ENCODE measurements at regions of chr13 and their contacts with region 1.

Region 1: DNA sequence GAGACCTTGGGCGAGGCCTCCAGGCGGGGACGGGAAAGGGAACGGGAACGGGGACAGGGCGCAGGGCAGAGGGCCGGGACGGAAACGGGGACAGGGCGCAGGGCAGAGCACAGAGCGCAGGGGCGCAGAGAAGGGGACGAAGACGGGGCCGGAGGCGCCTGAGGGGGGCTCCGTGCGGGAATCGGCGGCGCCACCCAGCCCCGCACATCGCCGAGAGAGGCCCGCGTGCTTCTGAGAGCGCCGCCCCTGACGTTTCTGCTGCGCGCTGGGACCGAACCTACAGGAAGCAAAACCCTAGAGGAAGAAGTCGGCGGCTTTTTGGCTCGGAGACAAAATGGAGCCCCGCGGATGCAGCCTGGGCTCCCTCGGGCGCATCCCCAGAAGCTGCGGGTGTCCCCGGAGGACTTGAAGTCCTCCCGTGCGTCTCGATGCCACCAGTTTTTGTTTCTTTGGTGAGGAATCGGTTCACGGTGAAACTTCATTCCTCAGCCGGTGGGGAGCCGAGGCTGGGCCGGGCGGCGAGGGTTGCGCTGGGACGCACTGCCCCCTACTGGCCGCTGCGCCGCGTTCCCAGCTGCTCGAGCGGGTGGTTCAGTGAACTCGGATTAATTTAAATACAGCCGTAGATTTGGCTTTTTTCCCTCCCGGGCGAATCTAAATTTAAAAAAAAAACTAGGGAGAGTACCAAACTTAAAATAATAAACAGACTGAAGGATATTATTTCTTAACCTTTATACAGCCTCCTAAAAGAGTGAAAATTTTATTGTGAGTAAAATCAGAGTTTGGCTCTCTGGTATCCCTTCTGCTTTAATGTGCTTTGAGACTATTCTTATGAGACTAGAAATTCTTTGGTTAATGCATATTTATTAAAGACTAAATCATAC is 350.0 kb upstream of the ARGLU1 start:
- DNase-seq: peak in 1 of 2 donors; percentile 88
- H3K4me3 ChIP-seq: peak overlapping the region; percentile 69 to 82
- H3K27ac ChIP-seq: peak overlapping the region; percentile 87 to 98
- H3K4me1 ChIP-seq: peaks cover 5 to 18% of the 10 kb centered on the region in 2 donors
- H3K27me3 ChIP-seq: no peaks in the 10 kb centered on the region
- CTCF ChIP-seq: peak; percentile 81 to 97 (median 94)

Region 2: GRCh38 chr13:106619688-106620555 is 298.0 kb before region 1 on chr13:
- intact Hi-C with region 1: loop called (anchors 5 kb)
- DNase-seq: no peak
- H3K4me3 ChIP-seq: no peak overlapping the region
- H3K27ac ChIP-seq: no peak overlapping the region
- H3K4me1 ChIP-seq: no peaks in the 10 kb centered on the region
- H3K27me3 ChIP-seq: no peaks in the 10 kb centered on the region
- CTCF ChIP-seq: peak; percentile 47 to 76 (median 69)

Region 3: DNA sequence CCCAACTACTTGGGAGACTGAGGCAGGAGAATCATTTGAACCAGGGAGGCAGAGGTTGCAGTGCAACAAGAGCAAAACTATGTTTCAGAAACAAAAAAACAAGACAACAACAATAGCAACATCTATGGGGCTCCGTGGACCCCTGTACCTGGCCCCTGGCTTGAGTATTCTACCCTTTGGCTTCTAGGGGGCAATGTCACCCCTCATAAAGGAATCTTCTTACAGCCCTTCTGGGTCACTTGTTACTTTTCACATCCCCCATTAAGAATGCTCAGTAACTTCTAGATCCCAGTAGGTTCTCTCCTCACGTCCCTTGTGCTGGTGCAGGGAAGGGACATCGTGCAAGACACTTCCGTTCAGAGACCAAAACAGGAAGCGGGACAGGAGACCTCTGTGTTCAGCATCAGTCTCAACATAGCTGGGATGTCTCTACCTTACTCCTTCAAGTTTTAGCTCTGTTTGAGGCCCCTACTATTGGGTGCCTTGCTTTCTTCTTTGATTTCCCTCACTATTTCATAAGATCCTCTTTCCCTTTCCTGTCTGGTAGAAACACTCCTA is 131.8 kb before region 1 on chr13:
- intact Hi-C with region 1: no loop called
- DNase-seq: no peak
- H3K4me3 ChIP-seq: no peak overlapping the region
- H3K27ac ChIP-seq: no peak overlapping the region
- H3K4me1 ChIP-seq: no peaks in the 10 kb centered on the region
- H3K27me3 ChIP-seq: no peaks in the 10 kb centered on the region
- CTCF ChIP-seq: no peak

Region 4: DNA sequence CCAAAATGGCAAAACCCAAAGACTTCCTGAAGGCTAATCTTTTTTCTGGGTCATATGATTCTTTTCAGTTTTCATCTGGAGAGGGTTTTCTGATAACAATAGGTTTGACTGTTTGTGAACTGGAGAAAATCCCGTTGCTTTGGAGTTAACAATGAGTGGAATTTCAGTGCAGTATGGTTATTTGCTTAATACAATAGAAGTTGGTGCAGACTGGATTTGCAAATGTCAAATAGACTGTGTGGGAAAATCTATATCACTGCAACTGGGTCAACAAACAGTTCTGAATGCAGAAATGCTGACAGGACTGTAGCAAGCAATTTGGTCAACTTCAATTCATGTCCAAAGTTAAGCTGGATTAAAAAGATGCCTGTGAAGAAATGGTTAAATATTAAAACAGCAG is 82.4 kb before region 1 on chr13:
- intact Hi-C with region 1: no loop called
- DNase-seq: no peak
- H3K4me3 ChIP-seq: no peak overlapping the region
- H3K27ac ChIP-seq: no peak overlapping the region
- H3K4me1 ChIP-seq: no peaks in the 10 kb centered on the region
- H3K27me3 ChIP-seq: no peaks in the 10 kb centered on the region
- CTCF ChIP-seq: no peak

Region 5: GRCh38 chr13:106867249-106867648 is 50.7 kb before region 1 on chr13:
- intact Hi-C with region 1: no loop called
- DNase-seq: no peak
- H3K4me3 ChIP-seq: peak overlapping the region; percentile 33 to 59
- H3K27ac ChIP-seq: no peak overlapping the region
- H3K4me1 ChIP-seq: peaks cover 0 to 7% of the 10 kb centered on the region in 2 donors
- H3K27me3 ChIP-seq: no peaks in the 10 kb centered on the region
- CTCF ChIP-seq: peak in 1 of 3 experiments; percentile 14

Region 6: GRCh38 chr13:106905380-106906162 is 12.3 kb before region 1 on chr13:
- intact Hi-C with region 1: no loop called
- DNase-seq: no peak
- H3K4me3 ChIP-seq: no peak overlapping the region
- H3K27ac ChIP-seq: no peak overlapping the region
- H3K4me1 ChIP-seq: no peaks in the 10 kb centered on the region
- H3K27me3 ChIP-seq: no peaks in the 10 kb centered on the region
- CTCF ChIP-seq: no peak

Region 7: GRCh38 chr13:106981051-106981450 is 63.1 kb after region 1 on chr13:
- intact Hi-C with region 1: loop called (anchors 1 kb)
- DNase-seq: no peak
- H3K4me3 ChIP-seq: peak overlapping the region in 1 of 2 donors; percentile 37
- H3K27ac ChIP-seq: peak overlapping the region; percentile 25 to 53
- H3K4me1 ChIP-seq: peaks cover 0 to 4% of the 10 kb centered on the region in 2 donors
- H3K27me3 ChIP-seq: no peaks in the 10 kb centered on the region
- CTCF ChIP-seq: no peak

Region 8: DNA sequence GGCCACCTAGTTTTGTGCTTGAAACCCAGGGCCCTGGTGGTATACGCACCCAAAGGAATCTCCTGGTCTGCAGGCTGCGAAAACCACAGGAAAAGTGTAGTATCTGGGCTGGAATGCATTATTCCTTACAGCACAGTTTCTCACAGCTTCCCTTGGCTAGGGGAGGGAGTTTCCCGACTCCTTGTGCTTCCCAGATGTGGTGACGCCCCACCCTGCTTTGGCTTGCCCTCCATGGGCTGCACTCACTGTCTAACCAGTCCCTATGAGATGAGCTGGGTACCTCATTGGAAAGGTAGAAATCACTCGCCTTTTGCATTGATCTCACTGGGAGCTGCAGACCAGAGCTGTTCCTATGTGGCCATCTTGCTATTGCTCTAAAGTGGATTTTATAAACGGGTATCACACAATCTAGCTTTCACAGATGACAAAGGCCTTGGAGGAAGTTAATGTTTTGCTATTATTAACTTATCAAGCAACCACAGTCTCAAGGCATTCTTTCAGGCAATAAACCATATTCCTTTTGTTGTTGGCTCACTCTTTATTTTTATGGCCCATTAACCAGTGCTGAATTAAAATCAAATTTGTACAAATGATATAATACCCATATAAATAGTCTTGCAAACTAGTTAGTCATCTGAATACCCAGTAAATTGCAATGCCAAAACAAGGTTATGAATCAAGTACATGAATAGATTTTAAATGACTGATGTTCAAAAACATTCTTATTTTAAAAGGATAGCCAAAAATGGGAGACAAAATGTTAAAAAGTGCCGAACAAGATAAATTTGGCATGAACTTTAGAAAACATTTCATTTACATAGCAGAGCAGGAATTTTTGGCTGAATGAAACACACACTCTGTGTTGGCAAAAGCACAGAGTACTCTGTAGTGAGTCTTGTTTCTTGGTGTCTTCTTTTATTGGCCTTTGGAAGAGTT is 125.4 kb after region 1 on chr13:
- intact Hi-C with region 1: loop called (anchors 5 kb)
- DNase-seq: peak in 1 of 2 donors; percentile 75
- H3K4me3 ChIP-seq: no peak overlapping the region
- H3K27ac ChIP-seq: peak overlapping the region; percentile 72 to 77
- H3K4me1 ChIP-seq: peaks cover 0 to 18% of the 10 kb centered on the region in 2 donors
- H3K27me3 ChIP-seq: no peaks in the 10 kb centered on the region
- CTCF ChIP-seq: no peak

Measured in ascending aorta (tissue), 2 donors.